IMR-90 (cell line): ENCODE measurements at regions of chr2 and their contacts with region 1.

Region 1: GRCh38 chr2:106638043-106638442 is 150.9 kb downstream of the CD8B2 start:
- DNase-seq: peak; percentile 1
- ATAC-seq: no peak
- H3K4me3 ChIP-seq: no peak overlapping the region
- H3K27ac ChIP-seq: no peak overlapping the region
- H3K4me1 ChIP-seq: no peaks in the 10 kb centered on the region
- H3K27me3 ChIP-seq: no peaks in the 10 kb centered on the region
- CTCF ChIP-seq: peak; percentile 33
- POLR2A ChIP-seq: no peak
- RAD21 ChIP-seq: peak; percentile 18; the same call in 1 of the 2 replicates

Region 2: GRCh38 chr2:108184419-108184818 is 1546.4 kb after region 1 on chr2:
- CTCF ChIA-PET with region 1: no interaction called
- POLR2A ChIA-PET with region 1: no interaction called
- dilution Hi-C with region 1: no loop called
- in situ Hi-C with region 1: loop called (anchors 25 kb)
- intact Hi-C with region 1: loop called (anchors 5 kb)
- DNase-seq: peak; percentile 13
- ATAC-seq: no peak
- H3K4me3 ChIP-seq: no peak overlapping the region
- H3K27ac ChIP-seq: no peak overlapping the region
- H3K4me1 ChIP-seq: no peaks in the 10 kb centered on the region
- H3K27me3 ChIP-seq: no peaks in the 10 kb centered on the region
- CTCF ChIP-seq: peak; percentile 29; the same call in 1 of the 2 replicates
- POLR2A ChIP-seq: no peak
- RAD21 ChIP-seq: no peak

Region 3: DNA sequence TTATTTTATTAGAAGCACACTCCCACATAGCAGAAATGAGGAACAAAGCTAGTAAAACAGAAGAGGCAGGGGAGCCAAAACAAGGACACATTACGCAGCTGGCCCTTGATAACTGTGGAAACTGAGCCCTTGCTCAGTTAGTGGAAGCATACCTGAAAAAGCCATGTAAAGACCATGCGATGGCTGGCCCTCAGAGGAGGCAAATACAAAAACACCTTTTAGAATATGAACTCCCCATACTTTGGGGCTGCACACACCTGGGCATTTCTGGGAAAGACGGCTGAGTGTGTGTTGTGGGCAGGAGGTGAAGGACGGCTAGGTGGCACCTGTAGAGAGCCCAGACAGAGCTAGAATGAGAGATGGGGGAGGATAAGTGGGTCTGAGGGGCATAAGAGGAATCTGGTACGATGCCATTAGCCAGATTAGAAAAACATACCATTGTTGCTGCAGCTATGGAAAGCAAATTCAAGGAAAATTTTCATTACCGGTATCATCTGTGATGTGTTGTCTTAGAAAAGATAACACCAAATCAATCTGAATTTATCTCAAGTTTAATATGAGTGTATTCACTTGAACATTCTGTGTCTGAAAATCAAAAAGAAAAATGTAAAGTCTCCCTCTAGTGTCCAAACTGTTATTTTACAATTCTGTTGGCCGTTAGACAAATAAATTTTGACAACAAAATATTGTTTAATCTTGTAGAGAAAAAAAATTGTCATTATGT is 1556.5 kb after region 1 on chr2:
- CTCF ChIA-PET with region 1: no interaction called
- POLR2A ChIA-PET with region 1: no interaction called
- dilution Hi-C with region 1: no loop called
- in situ Hi-C with region 1: loop called (anchors 25 kb)
- intact Hi-C with region 1: loop called (anchors 2 kb)
- DNase-seq: no peak
- ATAC-seq: no peak
- H3K4me3 ChIP-seq: no peak overlapping the region
- H3K27ac ChIP-seq: no peak overlapping the region
- H3K4me1 ChIP-seq: no peaks in the 10 kb centered on the region
- H3K27me3 ChIP-seq: peaks cover 3% of the 10 kb centered on the region; the same call in 1 of the 2 replicates
- CTCF ChIP-seq: peak; percentile 44
- POLR2A ChIP-seq: no peak
- RAD21 ChIP-seq: peak; percentile 10; the same call in 1 of the 2 replicates